ENCODE measurements at regions of chr17 and their contacts with region 1.

Region 1: GRCh38 chr17:40038882-40039513 is 15.2 kb downstream of the MED24 start:
- DNase-seq: peak; percentile 79
- ATAC-seq: peak; percentile 92
- H3K4me3 ChIP-seq: no peak overlapping the region
- H3K27ac ChIP-seq: peak overlapping the region; percentile 25
- H3K4me1 ChIP-seq: peaks cover 12% of the 10 kb centered on the region
- H3K27me3 ChIP-seq: no peaks in the 10 kb centered on the region
- CTCF ChIP-seq: peak; percentile 81
- EP300 ChIP-seq: no peak
- POLR2A ChIP-seq: no peak
- RAD21 ChIP-seq: peak; percentile 67

Region 2: GRCh38 chr17:39927101-39927928 is 111.7 kb before region 1 on chr17 and contains the starts of genes LRRC3C and ORMDL3:
- CTCF ChIA-PET with region 1: no interaction called
- POLR2A ChIA-PET with region 1: no interaction called
- in situ Hi-C with region 1: no loop called
- intact Hi-C with region 1: no loop called
- DNase-seq: peak; percentile 94
- ATAC-seq: peak; percentile 71
- H3K4me3 ChIP-seq: peak within 1 kb of the TSS; percentile 72 to 96 (median 90)
- H3K27ac ChIP-seq: peak within 1 kb of the TSS; percentile 93
- H3K4me1 ChIP-seq: peaks cover 65% of the 10 kb centered on the region
- H3K27me3 ChIP-seq: no peaks in the 10 kb centered on the region; a peak in 1 of 5 replicates
- CTCF ChIP-seq: no peak; the same call in 1 of the 2 replicates
- EP300 ChIP-seq: peak in 1 of 2 experiments; percentile 37; a peak in 1 of 4 replicates
- POLR2A ChIP-seq: peak; percentile 46 to 86
- RAD21 ChIP-seq: peak; percentile 57; the same call in 1 of the 2 replicates
- total RNA-seq, gene LRRC3C: not detected in 2 replicates
- total RNA-seq, gene ORMDL3: 125 and 181 TPM in 2 replicates

Region 3: DNA sequence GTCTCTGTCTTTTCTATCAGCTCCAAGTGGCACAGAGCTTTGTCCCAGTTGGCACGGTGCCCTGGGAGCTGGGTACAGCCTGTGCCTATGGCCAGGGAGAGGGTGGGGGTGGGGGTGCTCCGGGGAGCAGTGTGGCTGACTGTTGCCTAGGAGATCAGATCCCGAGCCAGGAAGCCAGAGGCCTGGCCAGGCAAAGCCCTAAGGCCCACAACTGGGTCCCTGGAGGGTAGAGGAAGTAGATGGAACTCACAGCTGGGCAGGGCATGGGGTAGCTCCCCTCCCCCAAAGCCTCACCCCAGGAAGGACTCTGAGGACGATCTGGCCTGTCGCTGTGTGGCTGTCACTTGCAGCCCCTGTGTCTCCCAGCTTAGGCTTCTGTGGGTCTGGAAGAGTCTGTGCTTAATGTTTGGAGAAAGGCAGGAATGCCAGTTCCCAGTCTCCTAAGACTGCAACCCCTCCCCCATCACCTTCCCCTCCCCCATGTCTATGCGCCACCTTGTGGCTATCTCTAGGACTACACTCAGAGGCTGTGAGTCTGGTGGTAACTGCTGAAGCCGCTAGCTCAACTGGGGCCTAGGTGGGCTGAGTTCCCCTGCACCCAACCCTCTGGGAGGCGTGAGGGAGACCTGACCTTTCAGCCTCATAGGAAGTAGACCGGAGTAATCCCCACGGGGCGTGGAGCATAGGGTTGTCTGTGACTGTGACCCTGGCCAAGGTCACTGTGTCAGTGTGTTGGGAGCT is 36.4 kb after region 1 on chr17:
- CTCF ChIA-PET with region 1: interaction called, 9 read pairs
- POLR2A ChIA-PET with region 1: no interaction called
- in situ Hi-C with region 1: no loop called
- intact Hi-C with region 1: loop called (anchors 2 kb)
- DNase-seq: peak; percentile 71
- ATAC-seq: peak; percentile 76
- H3K4me3 ChIP-seq: no peak overlapping the region
- H3K27ac ChIP-seq: peak overlapping the region; percentile 16
- H3K4me1 ChIP-seq: peaks cover 49% of the 10 kb centered on the region
- H3K27me3 ChIP-seq: no peaks in the 10 kb centered on the region
- CTCF ChIP-seq: peak; percentile 97
- EP300 ChIP-seq: peak in 1 of 2 experiments; percentile 69; a peak in 1 of 4 replicates
- POLR2A ChIP-seq: no peak
- RAD21 ChIP-seq: peak; percentile 76

Region 4: GRCh38 chr17:40086150-40087044 is 47.4 kb after region 1 on chr17:
- CTCF ChIA-PET with region 1: interaction called, 10 read pairs
- POLR2A ChIA-PET with region 1: interaction called, 4 read pairs
- in situ Hi-C with region 1: loop called (anchors 5 kb)
- intact Hi-C with region 1: loop called (anchors 1 kb)
- DNase-seq: peak; percentile 52
- ATAC-seq: peak; percentile 64
- H3K4me3 ChIP-seq: no peak overlapping the region
- H3K27ac ChIP-seq: no peak overlapping the region
- H3K4me1 ChIP-seq: 0 out of 2 replicates have a peak, but pooled peaks cover 13% of the 10 kb centered on the region
- H3K27me3 ChIP-seq: no peaks in the 10 kb centered on the region
- CTCF ChIP-seq: peak; percentile 91
- EP300 ChIP-seq: no peak
- POLR2A ChIP-seq: no peak
- RAD21 ChIP-seq: peak; percentile 97

Region 5: GRCh38 chr17:40168262-40168832 is 129.3 kb after region 1 on chr17:
- CTCF ChIA-PET with region 1: no interaction called
- POLR2A ChIA-PET with region 1: no interaction called
- in situ Hi-C with region 1: no loop called
- intact Hi-C with region 1: loop called (anchors 1 kb)
- DNase-seq: peak; percentile 77
- ATAC-seq: peak; percentile 69
- H3K4me3 ChIP-seq: no peak overlapping the region
- H3K27ac ChIP-seq: peak overlapping the region; percentile 16
- H3K4me1 ChIP-seq: peaks cover 26% of the 10 kb centered on the region
- H3K27me3 ChIP-seq: no peaks in the 10 kb centered on the region
- CTCF ChIP-seq: peak; percentile 89
- EP300 ChIP-seq: no peak
- POLR2A ChIP-seq: no peak
- RAD21 ChIP-seq: peak; percentile 82; the same call in 1 of the 2 replicates

Measured in HepG2 (cell line).